ENCODE measurements at regions of chr16 and their contacts with region 1.

Region 1: GRCh38 chr16:85114909-85115567 is 2.8 kb upstream of the CIBAR2 start:
- DNase-seq: peak; percentile 93
- ATAC-seq: peak; percentile 94
- H3K4me3 Mint-ChIP-seq: peak overlapping the region; percentile 9
- H3K27ac Mint-ChIP-seq: peak overlapping the region; percentile 91
- H3K4me1 Mint-ChIP-seq: peaks cover 7% of the 10 kb centered on the region
- H3K27me3 Mint-ChIP-seq: no peaks in the 10 kb centered on the region

Region 2: DNA sequence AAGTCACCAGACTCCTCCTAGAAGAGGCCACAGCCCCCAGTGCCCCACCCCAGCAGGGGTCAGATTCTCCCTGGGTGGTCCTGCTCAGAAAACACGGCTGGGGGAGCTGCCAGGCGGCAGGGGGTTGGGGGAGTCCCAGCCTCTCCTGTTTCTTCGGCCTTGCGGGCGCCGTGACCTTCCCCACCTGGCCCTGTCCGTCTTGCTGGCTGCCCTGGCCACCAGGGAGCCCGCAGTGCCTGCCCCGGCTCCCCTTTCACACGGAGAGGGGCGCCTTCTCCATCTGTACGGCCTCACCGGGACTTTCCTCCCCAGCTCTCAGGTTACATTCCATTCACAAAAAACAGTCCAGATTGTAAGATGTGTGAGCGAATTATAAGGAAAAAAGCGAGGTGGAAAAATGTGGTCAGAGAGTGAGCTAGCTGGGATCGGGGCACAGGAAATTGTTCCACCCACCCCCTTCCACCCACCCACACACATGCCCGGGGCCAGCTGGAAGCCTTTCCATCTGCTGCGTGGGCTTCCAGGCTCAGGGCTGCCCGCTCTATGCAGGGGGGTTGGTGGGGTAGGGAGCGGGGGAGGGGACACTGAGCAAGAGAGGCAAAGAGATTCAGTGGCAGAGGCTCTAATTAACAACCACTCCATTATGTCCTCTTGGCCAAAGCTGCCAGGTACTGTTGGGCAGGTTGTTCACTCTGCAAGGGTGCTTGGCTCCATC is 11.8 kb after region 1 on chr16:
- CTCF ChIA-PET with region 1: interaction called, 11 read pairs
- POLR2A ChIA-PET with region 1: no interaction called
- intact Hi-C with region 1: no loop called
- DNase-seq: peak; percentile 57
- ATAC-seq: peak; percentile 67
- H3K4me3 Mint-ChIP-seq: no peak overlapping the region
- H3K27ac Mint-ChIP-seq: peak overlapping the region; percentile 10
- H3K4me1 Mint-ChIP-seq: peaks cover 15% of the 10 kb centered on the region
- H3K27me3 Mint-ChIP-seq: no peaks in the 10 kb centered on the region

Region 3: DNA sequence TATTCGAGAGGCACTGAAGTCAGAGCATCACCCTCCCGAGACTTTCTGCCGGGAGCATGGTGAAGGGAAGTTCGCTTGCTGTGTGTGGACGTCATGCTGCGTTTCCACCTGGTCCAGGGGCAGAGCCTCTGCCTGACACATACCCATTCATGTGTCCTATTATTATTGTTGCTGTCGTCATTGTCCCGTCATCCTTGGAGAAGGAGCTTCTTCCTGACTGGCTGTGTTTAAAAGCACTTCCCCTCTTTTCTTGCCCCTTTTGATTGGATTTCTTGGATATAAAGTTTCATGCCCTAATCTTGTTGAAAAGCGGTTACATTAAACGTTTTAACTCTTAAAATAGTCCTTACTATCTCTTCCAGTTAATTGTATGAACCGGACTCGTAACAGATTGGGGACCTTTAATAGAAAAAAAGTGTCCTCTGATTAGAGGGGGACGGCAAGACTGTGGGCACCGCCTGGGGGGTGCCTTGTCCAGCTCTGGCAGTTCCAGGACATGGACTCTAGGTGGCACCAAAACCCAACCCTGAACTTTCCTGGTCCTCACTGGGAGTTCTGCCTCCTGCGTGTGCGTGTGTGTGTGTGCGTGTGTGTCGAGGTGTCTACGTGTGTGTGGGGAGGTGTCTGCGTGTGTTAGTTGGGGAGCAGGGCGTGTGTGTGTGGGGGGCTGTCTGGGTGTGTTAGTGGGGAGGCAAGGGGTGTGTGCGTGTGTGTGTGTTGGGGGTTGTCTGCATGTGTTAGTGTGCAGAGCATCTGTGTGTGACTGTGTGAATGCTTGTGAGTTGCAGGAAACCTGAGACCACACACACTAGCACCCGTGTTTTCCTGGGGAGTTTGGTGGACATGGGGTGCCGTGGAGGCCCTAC is 130.5 kb after region 1 on chr16:
- CTCF ChIA-PET with region 1: interaction called, 4 read pairs
- POLR2A ChIA-PET with region 1: no interaction called
- intact Hi-C with region 1: loop called (anchors 1 to 10 kb)
- DNase-seq: peak; percentile 70
- ATAC-seq: peak; percentile 80
- H3K4me3 Mint-ChIP-seq: no peak overlapping the region
- H3K27ac Mint-ChIP-seq: no peak overlapping the region
- H3K4me1 Mint-ChIP-seq: peaks cover 4% of the 10 kb centered on the region
- H3K27me3 Mint-ChIP-seq: peaks cover 2% of the 10 kb centered on the region

Region 4: GRCh38 chr16:85253084-85253941 is 138.3 kb after region 1 on chr16:
- CTCF ChIA-PET with region 1: interaction called, 4 read pairs
- POLR2A ChIA-PET with region 1: no interaction called
- intact Hi-C with region 1: loop called (anchors 2 to 10 kb)
- DNase-seq: peak; percentile 82
- ATAC-seq: peak; percentile 94
- H3K4me3 Mint-ChIP-seq: no peak overlapping the region
- H3K27ac Mint-ChIP-seq: no peak overlapping the region
- H3K4me1 Mint-ChIP-seq: no peaks in the 10 kb centered on the region
- H3K27me3 Mint-ChIP-seq: no peaks in the 10 kb centered on the region

Region 5: DNA sequence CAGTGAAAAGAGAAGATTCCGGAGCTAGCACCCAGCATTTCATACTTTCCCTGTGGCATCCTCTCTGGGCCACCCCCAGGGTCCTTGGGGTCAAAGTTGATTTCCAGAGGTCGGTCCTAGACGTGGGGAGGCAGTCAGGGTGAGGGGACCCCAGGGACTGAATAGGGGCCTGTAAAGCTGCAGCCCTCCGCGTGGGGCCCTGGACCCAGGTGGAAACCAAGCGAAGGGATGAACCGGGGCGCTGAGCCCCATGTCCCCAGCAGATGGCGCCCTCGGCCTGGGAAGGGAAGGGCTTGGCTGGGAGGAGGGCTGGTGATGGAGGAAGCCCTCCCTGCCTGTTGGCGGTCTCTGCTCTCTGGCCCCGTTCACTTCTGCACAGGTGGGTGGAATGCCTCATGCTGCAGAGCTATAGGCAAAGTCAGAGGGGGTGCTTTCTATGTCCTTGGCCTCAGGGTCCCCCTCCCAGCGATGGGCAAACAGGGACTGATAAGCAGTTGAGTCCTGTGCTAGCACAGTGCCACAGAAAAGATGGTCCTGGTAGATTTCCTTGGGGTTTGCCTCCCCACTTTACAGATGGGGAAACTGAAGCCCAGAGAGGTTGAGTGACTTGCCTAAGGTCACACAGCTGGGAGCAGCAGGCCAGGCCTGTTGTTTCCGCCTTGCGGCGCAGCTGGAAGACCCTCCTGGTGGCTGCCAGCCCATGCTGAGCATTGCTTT is 160.7 kb after region 1 on chr16:
- CTCF ChIA-PET with region 1: interaction called, 3 read pairs
- POLR2A ChIA-PET with region 1: no interaction called
- intact Hi-C with region 1: loop called in 1 of 2 experiments (anchors 1 kb)
- DNase-seq: peak; percentile 85
- ATAC-seq: peak; percentile 78
- H3K4me3 Mint-ChIP-seq: no peak overlapping the region
- H3K27ac Mint-ChIP-seq: no peak overlapping the region
- H3K4me1 Mint-ChIP-seq: no peaks in the 10 kb centered on the region
- H3K27me3 Mint-ChIP-seq: peaks cover 1% of the 10 kb centered on the region

Region 6: GRCh38 chr16:85305996-85306792 is 191.2 kb after region 1 on chr16:
- CTCF ChIA-PET with region 1: interaction called, 4 read pairs
- POLR2A ChIA-PET with region 1: no interaction called
- intact Hi-C with region 1: loop called in 1 of 2 experiments (anchors 5 kb)
- DNase-seq: peak; percentile 95
- ATAC-seq: peak; percentile 94
- H3K4me3 Mint-ChIP-seq: no peak overlapping the region
- H3K27ac Mint-ChIP-seq: peak overlapping the region; percentile 89
- H3K4me1 Mint-ChIP-seq: peaks cover 55% of the 10 kb centered on the region
- H3K27me3 Mint-ChIP-seq: no peaks in the 10 kb centered on the region